ENCODE measurements at regions of chr1 and their contacts with region 1.

Region 1: GRCh38 chr1:151839457-151840405 is at the start of gene C2CD4D:
- DNase-seq: peak; percentile 72 to 95 (median 86)

Region 2: GRCh38 chr1:151762941-151763921 is 76.5 kb before region 1 on chr1 and contains the start of gene MRPL9:
- intact Hi-C with region 1: no loop called
- DNase-seq: peak; percentile 77 to 95 (median 88)

Region 3: DNA sequence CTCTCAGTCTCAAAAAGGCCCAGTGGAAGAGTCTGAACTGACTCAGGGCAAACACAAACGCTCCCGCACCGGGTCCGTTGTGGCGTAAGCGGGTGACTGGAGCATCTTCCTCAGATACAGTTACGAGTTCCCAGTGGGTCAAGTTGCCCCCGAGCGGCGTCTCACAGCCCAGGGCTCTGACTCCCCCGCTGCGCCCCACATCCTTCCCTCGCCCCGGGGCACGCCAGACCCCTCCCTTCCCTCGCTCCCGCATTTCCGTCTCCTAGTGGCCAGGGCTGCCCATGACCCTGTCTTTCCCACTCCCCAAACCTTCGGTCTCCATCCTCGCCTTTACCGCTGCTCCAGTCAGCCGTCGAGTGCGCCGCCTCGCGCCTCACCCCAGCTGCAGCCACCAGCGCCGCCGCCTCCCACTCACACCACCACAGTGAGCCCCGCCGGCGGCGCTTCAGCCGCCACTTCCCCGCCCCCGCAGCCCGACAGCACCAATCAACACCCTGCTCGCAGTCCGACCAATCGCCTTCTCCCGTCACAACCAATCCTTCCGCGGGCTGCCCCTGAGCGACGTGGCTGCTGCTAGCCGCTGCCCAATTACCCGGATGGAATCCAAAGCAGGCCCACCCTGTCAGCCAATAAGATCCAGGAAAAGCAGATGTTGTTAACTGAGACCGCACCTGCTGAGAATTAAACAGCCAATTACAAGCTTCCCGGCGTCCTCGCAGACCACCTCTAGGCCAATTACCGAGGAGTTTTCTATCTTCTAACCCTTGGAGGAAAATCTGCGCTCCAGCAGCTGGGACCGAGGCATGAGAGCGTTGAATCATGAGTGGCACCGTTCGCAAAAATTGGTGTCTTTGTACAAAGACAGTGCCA is 49.4 kb before region 1 on chr1 and contains the start of gene TDRKH:
- intact Hi-C with region 1: loop called (anchors 2 kb)
- DNase-seq: peak; percentile 95 to 99 (median 98)

Region 4: GRCh38 chr1:152078831-152079441 is 239.2 kb after region 1 on chr1:
- intact Hi-C with region 1: no loop called
- DNase-seq: no peak